GM12878 (cell line): ENCODE measurements at regions of chrX and their contacts with region 1.

Region 1: GRCh38 chrX:49191033-49191871 is 5.1 kb upstream of the PRICKLE3 start:
- DNase-seq: peak; percentile 99
- ATAC-seq: peak; percentile 92
- H3K4me3 ChIP-seq: peak overlapping the region; percentile 74
- H3K27ac ChIP-seq: peak overlapping the region; percentile 65
- H3K4me1 ChIP-seq: peaks cover 3% of the 10 kb centered on the region; the same call in 1 of the 2 replicates
- H3K27me3 ChIP-seq: no peaks in the 10 kb centered on the region
- CTCF ChIP-seq: no peak
- EP300 ChIP-seq: no peak
- POLR2A ChIP-seq: peak; percentile 86
- RAD21 ChIP-seq: no peak

Region 2: GRCh38 chrX:48801280-48802088 is 389.8 kb before region 1 on chrX and contains the start of gene HDAC6:
- CTCF ChIA-PET with region 1: no interaction called
- POLR2A ChIA-PET with region 1: no interaction called
- RAD21 ChIA-PET with region 1: no interaction called
- SMC1A ChIA-PET with region 1: no interaction called
- in situ Hi-C with region 1: loop called (anchors 10 kb)
- intact Hi-C with region 1: no loop called
- DNase-seq: peak; percentile 94
- ATAC-seq: peak; percentile 90
- H3K4me3 ChIP-seq: peak within 1 kb of the TSS; percentile 69
- H3K27ac ChIP-seq: peak within 1 kb of the TSS; percentile 94
- H3K4me1 ChIP-seq: no peaks in the 10 kb centered on the region
- H3K27me3 ChIP-seq: no peaks in the 10 kb centered on the region
- CTCF ChIP-seq: no peak
- EP300 ChIP-seq: no peak
- POLR2A ChIP-seq: peak; percentile 75
- RAD21 ChIP-seq: no peak
- polyA plus RNA-seq, gene HDAC6: 8.3 to 17.5 TPM

Region 3: GRCh38 chrX:49129427-49129826 is 61.8 kb before region 1 on chrX:
- CTCF ChIA-PET with region 1: no interaction called
- POLR2A ChIA-PET with region 1: no interaction called
- RAD21 ChIA-PET with region 1: no interaction called
- SMC1A ChIA-PET with region 1: no interaction called
- in situ Hi-C with region 1: no loop called
- intact Hi-C with region 1: no loop called
- DNase-seq: no peak
- ATAC-seq: no peak
- H3K4me3 ChIP-seq: no peak overlapping the region
- H3K27ac ChIP-seq: no peak overlapping the region
- H3K4me1 ChIP-seq: no peaks in the 10 kb centered on the region
- H3K27me3 ChIP-seq: no peaks in the 10 kb centered on the region
- CTCF ChIP-seq: 0 out of 6 replicates have a peak, but pooled peaks of 1 of the 3 experiments have one; percentile 4
- EP300 ChIP-seq: no peak
- POLR2A ChIP-seq: no peak
- RAD21 ChIP-seq: no peak

Region 4: DNA sequence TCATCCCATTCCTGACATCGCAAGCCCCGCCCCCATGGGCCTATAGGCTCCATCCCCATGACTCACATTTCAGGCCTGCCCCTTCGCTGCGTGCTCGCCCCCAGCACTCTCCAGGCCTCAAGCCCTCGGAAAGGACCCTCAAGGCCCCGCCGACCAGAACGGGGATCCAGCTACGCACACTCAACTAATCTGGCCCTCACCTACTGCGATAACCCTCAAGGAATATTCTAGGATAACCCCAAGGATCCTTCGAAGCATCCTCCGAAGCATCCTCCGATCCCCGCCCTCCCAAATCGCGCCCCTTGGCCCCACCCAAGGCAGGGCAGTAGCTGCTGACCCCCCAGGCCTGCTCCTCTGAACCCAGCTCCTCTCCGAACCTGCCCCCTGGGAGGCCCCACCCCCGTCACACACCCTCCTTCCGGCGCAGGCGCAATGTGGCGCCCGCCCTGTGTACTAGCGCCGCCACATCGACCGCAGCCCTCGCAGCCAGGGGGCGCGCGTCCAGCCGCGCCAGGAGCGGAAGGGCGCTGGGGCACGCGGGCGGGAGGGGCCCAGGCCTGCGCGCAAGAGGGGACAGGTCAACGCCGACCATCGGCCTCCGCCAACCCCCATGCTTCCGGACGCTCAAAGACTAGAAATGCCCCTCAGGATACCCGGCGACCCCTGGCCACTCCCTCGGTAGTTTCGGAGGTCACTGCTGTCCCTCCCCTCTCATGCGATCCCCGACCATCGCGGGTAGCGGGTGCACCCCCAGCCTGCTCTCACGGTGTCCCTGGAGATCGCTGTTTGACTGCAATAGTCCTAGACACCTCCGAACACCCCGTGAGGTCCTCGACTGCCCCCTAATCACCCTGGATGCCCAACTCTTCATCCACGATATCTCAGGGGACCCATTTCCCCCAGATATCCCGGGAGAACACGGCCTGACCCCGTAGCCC is 35.1 kb before region 1 on chrX:
- CTCF ChIA-PET with region 1: interaction called, 12 read pairs
- POLR2A ChIA-PET with region 1: interaction called, 14 read pairs
- RAD21 ChIA-PET with region 1: interaction called, 11 read pairs
- SMC1A ChIA-PET with region 1: interaction called, 5 read pairs
- in situ Hi-C with region 1: no loop called
- intact Hi-C with region 1: no loop called
- DNase-seq: no peak
- ATAC-seq: peak; percentile 95
- H3K4me3 ChIP-seq: peak overlapping the region; percentile 62
- H3K27ac ChIP-seq: peak overlapping the region; percentile 43
- H3K4me1 ChIP-seq: no peaks in the 10 kb centered on the region
- H3K27me3 ChIP-seq: no peaks in the 10 kb centered on the region
- CTCF ChIP-seq: peak; percentile 57 to 79 (median 58); a peak in 5 of 6 replicates
- EP300 ChIP-seq: no peak
- POLR2A ChIP-seq: peak; percentile 75
- RAD21 ChIP-seq: peak; percentile 37; the same call in 1 of the 2 replicates

Region 5: GRCh38 chrX:49209434-49210251 is 18.4 kb after region 1 on chrX:
- CTCF ChIA-PET with region 1: interaction called, 17 read pairs
- POLR2A ChIA-PET with region 1: interaction called, 4 read pairs
- RAD21 ChIA-PET with region 1: interaction called, 3 read pairs
- SMC1A ChIA-PET with region 1: interaction called, 5 read pairs
- in situ Hi-C with region 1: no loop called
- intact Hi-C with region 1: no loop called
- DNase-seq: no peak
- ATAC-seq: no peak
- H3K4me3 ChIP-seq: no peak overlapping the region
- H3K27ac ChIP-seq: no peak overlapping the region
- H3K4me1 ChIP-seq: no peaks in the 10 kb centered on the region
- H3K27me3 ChIP-seq: no peaks in the 10 kb centered on the region
- CTCF ChIP-seq: no peak
- EP300 ChIP-seq: no peak
- POLR2A ChIP-seq: no peak
- RAD21 ChIP-seq: no peak

Region 6: GRCh38 chrX:49269010-49269767 is 77.9 kb after region 1 on chrX:
- CTCF ChIA-PET with region 1: interaction called, 18 read pairs
- POLR2A ChIA-PET with region 1: interaction called, 17 read pairs
- RAD21 ChIA-PET with region 1: interaction called, 19 read pairs
- SMC1A ChIA-PET with region 1: interaction called, 14 read pairs
- in situ Hi-C with region 1: loop called (anchors 5 kb)
- intact Hi-C with region 1: loop called (anchors 2 kb)
- DNase-seq: peak; percentile 93
- ATAC-seq: peak; percentile 94
- H3K4me3 ChIP-seq: peak overlapping the region; percentile 73; the same call in 1 of the 2 replicates
- H3K27ac ChIP-seq: peak overlapping the region; percentile 91
- H3K4me1 ChIP-seq: peaks cover 4% of the 10 kb centered on the region; the same call in 1 of the 2 replicates
- H3K27me3 ChIP-seq: no peaks in the 10 kb centered on the region
- CTCF ChIP-seq: no peak
- EP300 ChIP-seq: no peak; a peak in 1 of 4 replicates
- POLR2A ChIP-seq: peak; percentile 87
- RAD21 ChIP-seq: no peak